Activated CD8-positive, alpha-beta T cell treated with anti-CD3 and anti-CD28 coated beads, Interleukin-2, amount 10 ng/mL, durations not matched to agents 7 days and 5 days (primary cell): ENCODE measurements at regions of chr21 and their contacts with region 1.

Region 1: GRCh38 chr21:42403611-42404231 is at the start of gene UBASH3A:
- DNase-seq: peak; percentile 78
- ATAC-seq: peak; percentile 72
- H3K4me3 Mint-ChIP-seq: peak within 1 kb of the TSS; percentile 95
- H3K27ac Mint-ChIP-seq: peak within 1 kb of the TSS; percentile 92
- H3K4me1 Mint-ChIP-seq: peaks cover 59% of the 10 kb centered on the region
- H3K27me3 Mint-ChIP-seq: no peaks in the 10 kb centered on the region
- total RNA-seq, gene UBASH3A: 68.7 to 74.0 TPM

Region 2: GRCh38 chr21:42258153-42258884 is 145.4 kb before region 1 on chr21:
- CTCF ChIA-PET with region 1: no interaction called
- POLR2A ChIA-PET with region 1: no interaction called
- DNase-seq: peak; percentile 87
- ATAC-seq: peak; percentile 92
- H3K4me3 Mint-ChIP-seq: no peak overlapping the region
- H3K27ac Mint-ChIP-seq: no peak overlapping the region
- H3K4me1 Mint-ChIP-seq: peaks cover 18% of the 10 kb centered on the region
- H3K27me3 Mint-ChIP-seq: no peaks in the 10 kb centered on the region

Region 3: GRCh38 chr21:42337830-42338728 is 65.6 kb before region 1 on chr21:
- CTCF ChIA-PET with region 1: interaction called, 14 read pairs
- POLR2A ChIA-PET with region 1: interaction called, 4 read pairs
- DNase-seq: peak; percentile 88
- ATAC-seq: peak; percentile 99
- H3K4me3 Mint-ChIP-seq: no peak overlapping the region
- H3K27ac Mint-ChIP-seq: peak overlapping the region; percentile 49
- H3K4me1 Mint-ChIP-seq: peaks cover 11% of the 10 kb centered on the region
- H3K27me3 Mint-ChIP-seq: peaks cover 18% of the 10 kb centered on the region

Region 4: DNA sequence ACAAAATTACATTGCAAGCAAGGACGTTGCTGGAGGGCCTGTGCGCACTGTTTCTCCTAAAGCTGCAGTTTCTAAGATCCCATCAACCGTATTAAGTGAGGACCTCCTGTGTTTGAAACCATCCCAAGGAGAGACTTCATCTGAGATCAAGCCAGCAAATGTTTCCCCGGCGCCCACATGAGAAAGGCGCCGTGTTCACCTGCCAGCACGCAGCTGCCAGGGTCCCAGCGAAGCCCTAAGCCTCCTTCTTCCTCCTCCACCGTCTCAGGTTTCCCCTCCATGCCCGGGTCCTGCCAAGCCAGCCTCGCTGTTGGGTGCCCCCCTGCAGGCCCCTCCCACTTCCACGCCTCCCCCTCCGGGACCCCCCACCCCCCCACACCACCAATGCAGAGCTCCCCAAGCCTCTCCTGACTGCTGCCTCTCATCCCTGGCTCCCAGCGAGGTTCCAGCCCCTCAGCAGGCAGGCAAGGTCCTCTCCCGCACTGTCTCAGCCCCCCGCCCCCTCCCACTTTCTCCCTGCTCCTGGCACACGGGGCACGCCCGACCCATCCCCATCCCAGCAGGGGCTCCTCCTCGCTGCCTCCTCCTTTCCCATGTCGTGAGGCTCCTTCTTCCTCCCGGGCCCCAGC is 28.7 kb before region 1 on chr21:
- CTCF ChIA-PET with region 1: interaction called, 5 read pairs
- POLR2A ChIA-PET with region 1: interaction called, 20 read pairs
- DNase-seq: no peak
- ATAC-seq: no peak
- H3K4me3 Mint-ChIP-seq: no peak overlapping the region
- H3K27ac Mint-ChIP-seq: no peak overlapping the region
- H3K4me1 Mint-ChIP-seq: peaks cover 27% of the 10 kb centered on the region
- H3K27me3 Mint-ChIP-seq: no peaks in the 10 kb centered on the region

Region 5: GRCh38 chr21:42381334-42381984 is 22.3 kb before region 1 on chr21:
- CTCF ChIA-PET with region 1: interaction called, 35 read pairs
- POLR2A ChIA-PET with region 1: interaction called, 10 read pairs
- DNase-seq: peak; percentile 45
- ATAC-seq: peak; percentile 58
- H3K4me3 Mint-ChIP-seq: no peak overlapping the region
- H3K27ac Mint-ChIP-seq: no peak overlapping the region
- H3K4me1 Mint-ChIP-seq: peaks cover 25% of the 10 kb centered on the region
- H3K27me3 Mint-ChIP-seq: no peaks in the 10 kb centered on the region

Region 6: DNA sequence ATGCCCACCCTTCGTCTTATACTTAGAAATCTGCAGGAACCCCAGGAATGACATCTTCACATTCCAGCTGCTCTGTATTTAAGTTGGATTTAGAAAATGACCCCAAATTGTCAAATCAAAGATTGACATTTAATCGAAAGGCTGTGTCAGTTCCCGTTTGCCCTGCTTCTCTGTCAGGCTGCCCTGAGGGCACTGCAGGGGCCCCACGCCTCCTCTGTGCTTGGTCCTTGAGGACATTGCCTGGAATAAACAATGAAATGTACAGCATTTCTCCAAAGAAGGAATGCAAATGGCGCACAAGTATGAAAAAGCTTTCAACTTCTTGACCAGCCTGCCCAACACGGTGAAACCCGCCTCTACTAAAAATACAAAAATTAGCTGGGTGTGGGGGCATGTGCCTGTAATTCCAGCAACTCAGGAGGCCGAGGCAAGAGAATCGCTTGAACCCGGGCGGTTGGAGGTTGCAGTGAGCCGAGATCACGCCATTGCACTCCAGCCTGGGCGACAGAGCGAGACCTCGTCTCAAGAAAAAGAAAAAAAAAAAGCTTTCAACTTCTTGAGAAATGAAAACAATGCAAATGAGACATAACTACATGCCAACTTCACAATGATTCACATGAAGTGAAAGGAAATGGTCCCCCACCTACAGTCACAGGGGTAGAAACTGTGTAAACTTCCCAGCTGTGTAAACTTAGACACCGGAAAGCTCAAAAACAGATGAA is 10.8 kb before region 1 on chr21:
- CTCF ChIA-PET with region 1: interaction called, 23 read pairs
- POLR2A ChIA-PET with region 1: interaction called, 52 read pairs
- DNase-seq: no peak
- ATAC-seq: peak; percentile 73
- H3K4me3 Mint-ChIP-seq: peak overlapping the region; percentile 42
- H3K27ac Mint-ChIP-seq: peak overlapping the region; percentile 74
- H3K4me1 Mint-ChIP-seq: peaks cover 73% of the 10 kb centered on the region
- H3K27me3 Mint-ChIP-seq: no peaks in the 10 kb centered on the region

Region 7: GRCh38 chr21:42414928-42415769 is 11.4 kb after region 1 on chr21:
- CTCF ChIA-PET with region 1: interaction called, 76 read pairs
- POLR2A ChIA-PET with region 1: interaction called, 97 read pairs
- DNase-seq: peak; percentile 89
- ATAC-seq: peak; percentile 86
- H3K4me3 Mint-ChIP-seq: peak overlapping the region; percentile 67
- H3K27ac Mint-ChIP-seq: peak overlapping the region; percentile 95
- H3K4me1 Mint-ChIP-seq: peaks cover 74% of the 10 kb centered on the region
- H3K27me3 Mint-ChIP-seq: no peaks in the 10 kb centered on the region

Region 8: GRCh38 chr21:42424914-42425541 is 21.3 kb after region 1 on chr21:
- CTCF ChIA-PET with region 1: interaction called, 76 read pairs
- POLR2A ChIA-PET with region 1: interaction called, 97 read pairs
- DNase-seq: peak; percentile 89
- ATAC-seq: peak; percentile 83
- H3K4me3 Mint-ChIP-seq: peak overlapping the region; percentile 67
- H3K27ac Mint-ChIP-seq: peak overlapping the region; percentile 90
- H3K4me1 Mint-ChIP-seq: peaks cover 77% of the 10 kb centered on the region
- H3K27me3 Mint-ChIP-seq: no peaks in the 10 kb centered on the region

Region 9: DNA sequence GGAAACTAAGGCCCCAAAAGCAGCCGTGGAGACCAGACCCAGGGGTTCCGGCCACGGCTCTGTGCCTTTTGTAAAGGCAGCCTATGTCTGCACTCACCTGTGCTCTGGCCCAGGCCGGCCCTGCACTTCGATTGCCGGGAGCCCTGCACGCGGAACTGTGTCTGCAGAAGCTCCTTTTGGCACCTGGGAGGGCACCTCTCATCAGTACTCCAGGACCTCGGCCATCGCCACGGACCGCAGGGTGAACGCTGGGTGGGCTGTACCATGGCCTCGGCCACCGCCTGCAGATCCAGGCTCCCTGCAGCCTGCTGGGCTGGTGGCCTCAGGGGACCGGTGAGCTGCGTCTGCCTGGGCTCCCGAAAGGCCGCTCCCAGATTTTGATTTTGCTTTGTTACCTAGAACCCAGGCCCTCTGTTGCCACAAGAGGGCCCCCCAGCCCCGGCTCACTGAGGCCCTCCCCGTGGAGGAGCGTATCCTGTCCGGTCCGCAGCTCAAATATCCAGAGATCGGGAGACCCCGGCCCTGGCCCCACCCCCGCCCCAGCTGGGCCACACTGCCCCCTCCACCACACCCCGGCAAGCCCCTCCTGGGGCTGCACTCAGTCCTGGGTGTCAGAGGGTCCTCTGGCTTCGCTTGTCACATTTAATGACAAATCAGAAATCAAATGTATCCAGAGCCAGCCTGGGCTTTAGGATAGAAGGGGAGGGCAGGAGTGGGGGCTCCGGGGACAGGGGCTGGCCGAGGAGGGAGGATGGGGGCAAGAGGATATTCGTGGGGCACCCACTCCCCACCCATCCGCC is 189.5 kb after region 1 on chr21:
- CTCF ChIA-PET with region 1: no interaction called
- POLR2A ChIA-PET with region 1: no interaction called
- DNase-seq: peak; percentile 79
- ATAC-seq: peak; percentile 93
- H3K4me3 Mint-ChIP-seq: no peak overlapping the region
- H3K27ac Mint-ChIP-seq: no peak overlapping the region
- H3K4me1 Mint-ChIP-seq: peaks cover 18% of the 10 kb centered on the region
- H3K27me3 Mint-ChIP-seq: peaks cover 4% of the 10 kb centered on the region

Region 10: GRCh38 chr21:42636538-42636930 is 232.8 kb after region 1 on chr21:
- CTCF ChIA-PET with region 1: no interaction called
- POLR2A ChIA-PET with region 1: no interaction called
- DNase-seq: no peak
- ATAC-seq: no peak
- H3K4me3 Mint-ChIP-seq: no peak overlapping the region
- H3K27ac Mint-ChIP-seq: no peak overlapping the region
- H3K4me1 Mint-ChIP-seq: peaks cover 1% of the 10 kb centered on the region
- H3K27me3 Mint-ChIP-seq: peaks cover 5% of the 10 kb centered on the region